ENCODE measurements at regions of chr18 and their contacts with region 1.

Region 1: GRCh38 chr18:76982841-76983587 is 149.6 kb downstream of the MBP start:
- DNase-seq: peak; percentile 58 to 90 (median 78)
- ATAC-seq: peak; percentile 64 to 84 (median 78)
- H3K4me3 ChIP-seq: no peak overlapping the region
- H3K27ac ChIP-seq: no peak overlapping the region
- H3K4me1 ChIP-seq: peaks cover 0 to 16% (median 2%) of the 10 kb centered on the region in 12 donors
- H3K27me3 ChIP-seq: no peaks in the 10 kb centered on the region
- CTCF ChIP-seq: peak; percentile 74 to 95 (median 90)
- POLR2A ChIP-seq: no peak

Region 2: GRCh38 chr18:76725445-76725844 is 257.6 kb before region 1 on chr18:
- intact Hi-C with region 1: no loop called
- DNase-seq: no peak
- ATAC-seq: no peak
- H3K4me3 ChIP-seq: no peak overlapping the region
- H3K27ac ChIP-seq: no peak overlapping the region
- H3K4me1 ChIP-seq: peaks cover 0 to 3% (median 0%) of the 10 kb centered on the region in 12 donors
- H3K27me3 ChIP-seq: no peaks in the 10 kb centered on the region
- CTCF ChIP-seq: no peak
- POLR2A ChIP-seq: no peak

Region 3: GRCh38 chr18:76922107-76922506 is 60.9 kb before region 1 on chr18:
- intact Hi-C with region 1: loop called in 2 of 10 experiments (anchors 5 to 10 kb)
- DNase-seq: peak in 3 of 5 donors; percentile 32 to 62 (median 43)
- ATAC-seq: peak; percentile 83 to 93 (median 92)
- H3K4me3 ChIP-seq: no peak overlapping the region
- H3K27ac ChIP-seq: no peak overlapping the region
- H3K4me1 ChIP-seq: no peaks in the 10 kb centered on the region
- H3K27me3 ChIP-seq: no peaks in the 10 kb centered on the region
- CTCF ChIP-seq: peak; percentile 21 to 64 (median 46)
- POLR2A ChIP-seq: no peak